ENCODE measurements at regions of chr15 and their contacts with region 1.

Region 1: DNA sequence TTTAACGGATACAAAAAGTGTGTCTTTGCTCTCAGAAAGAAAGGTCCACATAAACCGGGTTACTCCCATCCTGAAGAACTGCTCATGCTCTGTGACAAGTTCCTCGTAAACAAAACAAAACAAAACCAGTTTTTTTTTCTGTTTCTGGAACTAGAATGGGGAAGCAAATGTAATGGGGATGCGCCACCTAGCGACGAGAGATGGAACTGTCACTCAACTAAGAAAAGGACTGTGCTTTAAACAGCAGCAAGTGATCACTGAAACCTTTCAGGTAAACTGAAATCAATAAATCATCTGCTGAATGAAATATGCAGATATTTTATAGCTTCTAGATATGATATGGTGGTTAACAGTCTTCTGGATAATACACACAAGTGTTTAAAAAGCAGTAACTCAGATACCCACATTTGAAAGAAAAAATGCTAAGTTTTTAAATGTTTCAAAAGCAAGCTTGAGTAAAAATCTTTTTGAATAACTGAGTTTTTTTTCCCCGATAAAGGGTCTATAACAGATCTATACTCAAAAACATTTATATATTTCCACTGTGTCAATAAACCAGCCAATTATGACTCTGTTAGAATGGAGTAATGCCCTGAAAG is 10.9 kb downstream of the TM2D3 start:
- DNase-seq: peak; percentile 64
- CTCF ChIP-seq: peak; percentile 83

Region 2: DNA sequence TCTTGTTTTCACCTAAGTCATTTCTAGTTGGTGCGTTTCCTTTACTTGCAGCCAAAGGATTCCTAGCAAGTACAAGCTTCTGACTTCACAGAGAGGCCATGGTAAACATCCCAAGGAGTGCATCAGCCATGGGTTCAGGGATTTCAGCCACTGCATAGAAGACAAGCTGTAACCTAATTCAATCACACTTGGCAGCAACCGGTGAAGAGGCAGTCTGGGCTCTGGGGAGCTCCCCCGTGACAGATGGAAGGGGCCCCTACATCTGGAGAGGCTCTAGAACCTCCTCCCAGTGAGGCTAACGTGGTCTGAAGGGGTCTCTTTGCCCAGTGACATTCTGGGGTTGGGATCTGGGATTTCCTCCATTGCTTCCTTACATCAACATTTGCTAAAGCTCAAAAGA is 337.9 kb before region 1 on chr15:
- in situ Hi-C with region 1: loop called (anchors 5 kb)
- DNase-seq: no peak
- CTCF ChIP-seq: no peak

Measured in GM13976 (cell line).